Endothelial cell of umbilical vein (primary cell): ENCODE measurements at regions of chr7 and their contacts with region 1.

Region 1: GRCh38 chr7:2314209-2314955 is at the start of gene SNX8:
- DNase-seq: peak; percentile 81
- H3K4me3 ChIP-seq: peak within 1 kb of the TSS; percentile 58 to 90 (median 67)
- H3K27ac ChIP-seq: peak within 1 kb of the TSS; percentile 30
- H3K4me1 ChIP-seq: peaks cover 6% of the 10 kb centered on the region
- H3K27me3 ChIP-seq: no peaks in the 10 kb centered on the region
- CTCF ChIP-seq: no peak
- POLR2A ChIP-seq: peak; percentile 82
- total RNA-seq, gene SNX8: 41.4 and 50.3 TPM in 2 replicates

Region 2: DNA sequence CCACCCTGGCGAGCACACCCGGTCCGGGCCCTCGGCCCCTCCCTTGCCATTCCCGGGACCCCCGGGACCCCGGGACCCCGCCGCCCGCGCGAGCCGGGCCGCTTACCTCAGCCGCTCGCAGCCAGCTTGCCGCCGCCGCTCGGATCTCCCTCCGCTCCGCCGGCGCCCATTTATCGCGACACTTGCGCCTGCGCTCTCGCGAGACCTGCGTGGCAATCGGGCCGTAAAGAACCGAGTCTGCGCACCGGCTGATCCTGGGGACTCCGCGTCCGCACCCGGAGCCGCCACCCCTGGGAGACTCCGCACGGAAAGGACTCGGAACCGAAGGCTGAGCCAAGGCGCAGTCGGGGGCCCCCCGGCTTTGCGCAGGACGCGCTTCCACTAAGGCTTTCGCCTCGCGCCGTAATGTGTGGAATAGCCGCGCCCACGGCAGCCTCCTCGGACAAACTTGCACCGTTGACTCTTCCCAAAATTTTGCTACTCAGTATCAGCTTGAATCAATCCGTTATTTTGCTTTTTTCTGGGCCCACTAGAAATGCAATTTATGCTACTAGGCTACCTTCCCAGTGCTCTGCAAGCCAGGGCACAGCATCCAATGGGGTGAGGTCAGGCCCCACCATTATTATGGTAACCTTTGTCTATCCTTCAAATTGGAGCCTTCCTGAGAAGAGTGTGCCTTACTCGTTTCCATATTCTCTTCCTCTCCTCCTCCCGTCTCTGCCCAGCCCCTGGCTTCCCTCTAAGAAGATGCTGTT is 81.4 kb before region 1 on chr7 and contains the start of gene MAD1L1:
- CTCF ChIA-PET with region 1: no interaction called
- POLR2A ChIA-PET with region 1: interaction called, 12 read pairs
- dilution Hi-C with region 1: no loop called
- intact Hi-C with region 1: no loop called
- DNase-seq: peak; percentile 92
- H3K4me3 ChIP-seq: peak within 1 kb of the TSS; percentile 71 to 85 (median 79)
- H3K27ac ChIP-seq: peak within 1 kb of the TSS; percentile 53
- H3K4me1 ChIP-seq: peaks cover 22% of the 10 kb centered on the region
- H3K27me3 ChIP-seq: no peaks in the 10 kb centered on the region
- CTCF ChIP-seq: no peak
- POLR2A ChIP-seq: peak; percentile 68
- total RNA-seq, gene MAD1L1: 42.3 and 46.7 TPM in 2 replicates

Region 3: DNA sequence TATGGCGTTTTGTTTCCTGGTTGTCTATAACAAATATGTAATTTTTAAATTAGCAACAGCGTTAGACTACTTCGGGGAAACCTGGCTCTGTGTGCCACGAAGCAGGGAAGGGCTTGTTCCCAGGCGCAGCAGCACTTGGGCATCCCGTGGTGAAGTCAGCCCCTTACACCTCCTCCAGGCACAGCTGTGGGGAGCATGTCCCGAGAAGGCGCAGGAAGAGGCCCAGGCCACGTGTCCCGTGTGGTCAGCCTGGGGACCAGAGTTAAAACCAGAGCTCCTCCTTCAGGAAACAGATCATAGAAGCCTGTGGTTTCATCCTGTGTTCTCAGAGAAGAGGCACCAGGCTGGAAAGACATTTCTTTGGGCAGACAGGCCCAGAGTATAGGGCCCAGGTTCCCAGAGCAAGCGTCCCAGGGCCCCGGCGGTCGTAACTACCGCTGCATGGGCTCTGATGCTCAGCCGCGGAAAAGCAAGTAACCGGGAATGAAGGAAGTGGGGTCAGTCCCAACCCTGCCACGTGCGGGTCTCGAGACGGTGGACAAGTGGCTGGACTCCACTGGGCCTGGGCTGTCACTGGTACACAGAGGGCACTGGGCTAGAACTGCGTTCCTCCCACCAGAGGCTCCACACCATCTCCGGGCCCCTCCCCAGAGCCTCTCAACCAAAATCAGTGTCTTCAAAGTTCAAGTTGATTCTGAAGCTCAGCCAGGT is 65.2 kb before region 1 on chr7:
- CTCF ChIA-PET with region 1: no interaction called
- POLR2A ChIA-PET with region 1: no interaction called
- dilution Hi-C with region 1: no loop called
- intact Hi-C with region 1: loop called (anchors 1 kb)
- DNase-seq: peak; percentile 82
- H3K4me3 ChIP-seq: no peak overlapping the region
- H3K27ac ChIP-seq: peak overlapping the region; percentile 90
- H3K4me1 ChIP-seq: peaks cover 17% of the 10 kb centered on the region
- H3K27me3 ChIP-seq: no peaks in the 10 kb centered on the region
- CTCF ChIP-seq: no peak
- POLR2A ChIP-seq: peak; percentile 44